Left cardiac atrium (tissue), 4 donors: ENCODE measurements at regions of chrX and their contacts with region 1.

Region 1: GRCh38 chrX:84907324-84907968 is 96.2 kb upstream of the APOOL start:
- DNase-seq: no peak
- ATAC-seq: no peak

Region 2: DNA sequence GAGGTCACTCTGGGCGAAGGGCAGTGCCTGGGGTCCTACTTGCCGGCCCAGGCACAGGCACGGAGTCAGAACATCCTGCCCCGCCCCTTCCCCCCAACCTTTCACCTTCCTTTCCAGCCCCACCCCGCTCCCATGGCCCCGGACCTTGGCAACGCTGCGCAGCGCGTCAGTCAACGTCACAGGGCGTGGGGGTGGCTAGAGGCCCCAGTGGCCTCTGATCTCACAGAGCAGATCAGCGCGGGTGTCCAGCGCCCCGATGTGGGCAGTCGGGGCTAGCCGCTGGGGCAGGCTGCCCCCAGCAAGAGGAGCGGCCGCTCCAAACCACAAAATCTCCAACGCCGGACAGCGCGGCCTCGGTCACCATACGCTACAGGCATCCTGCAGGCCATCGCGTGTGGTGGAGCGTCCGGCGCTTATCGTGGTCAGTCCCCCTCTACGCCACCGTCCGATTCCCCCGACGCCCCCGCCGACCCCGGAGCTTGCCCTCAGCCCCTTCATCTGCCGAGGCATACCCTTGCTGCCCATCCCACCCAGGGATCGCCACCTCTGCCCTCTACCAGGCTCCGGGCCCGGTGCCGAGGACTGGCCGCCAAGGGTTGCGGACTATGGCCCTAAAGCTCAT is 26.6 kb after region 1 on chrX:
- intact Hi-C with region 1: loop called in 1 of 2 experiments (anchors 2 kb)
- DNase-seq: no peak
- ATAC-seq: no peak